Activated naive CD4-positive, alpha-beta T cell treated with anti-CD3 and anti-CD28 coated beads for 36 hours (primary cell): ENCODE measurements at regions of chr2 and their contacts with region 1.

Region 1: GRCh38 chr2:172465417-172466334 is 38.3 kb downstream of the ITGA6 start:
- DNase-seq: peak; percentile 91
- H3K4me3 Mint-ChIP-seq: peak overlapping the region; percentile 53
- H3K27ac Mint-ChIP-seq: peak overlapping the region; percentile 75
- H3K4me1 Mint-ChIP-seq: peaks cover 74% of the 10 kb centered on the region
- H3K27me3 Mint-ChIP-seq: no peaks in the 10 kb centered on the region

Region 2: GRCh38 chr2:171687287-171688128 is 778.2 kb before region 1 on chr2 and contains the start of gene DYNC1I2:
- CTCF ChIA-PET with region 1: interaction called, 3 read pairs
- intact Hi-C with region 1: loop called (anchors 5 kb)
- DNase-seq: peak; percentile 88
- H3K4me3 Mint-ChIP-seq: peak within 1 kb of the TSS; percentile 84
- H3K27ac Mint-ChIP-seq: peak within 1 kb of the TSS; percentile 85
- H3K4me1 Mint-ChIP-seq: peaks cover 15% of the 10 kb centered on the region
- H3K27me3 Mint-ChIP-seq: no peaks in the 10 kb centered on the region
- total RNA-seq, gene DYNC1I2: 37.8 to 38.9 TPM

Region 3: GRCh38 chr2:172102391-172103278 is 363.0 kb before region 1 on chr2 and contains the start of gene DLX2:
- CTCF ChIA-PET with region 1: interaction called, 3 read pairs
- intact Hi-C with region 1: loop called (anchors 2 kb)
- DNase-seq: peak; percentile 74
- H3K4me3 Mint-ChIP-seq: peak within 1 kb of the TSS; percentile 76
- H3K27ac Mint-ChIP-seq: peak within 1 kb of the TSS; percentile 24
- H3K4me1 Mint-ChIP-seq: peaks cover 50% of the 10 kb centered on the region
- H3K27me3 Mint-ChIP-seq: peaks cover 71% of the 10 kb centered on the region
- total RNA-seq, gene DLX2: not detected

Region 4: DNA sequence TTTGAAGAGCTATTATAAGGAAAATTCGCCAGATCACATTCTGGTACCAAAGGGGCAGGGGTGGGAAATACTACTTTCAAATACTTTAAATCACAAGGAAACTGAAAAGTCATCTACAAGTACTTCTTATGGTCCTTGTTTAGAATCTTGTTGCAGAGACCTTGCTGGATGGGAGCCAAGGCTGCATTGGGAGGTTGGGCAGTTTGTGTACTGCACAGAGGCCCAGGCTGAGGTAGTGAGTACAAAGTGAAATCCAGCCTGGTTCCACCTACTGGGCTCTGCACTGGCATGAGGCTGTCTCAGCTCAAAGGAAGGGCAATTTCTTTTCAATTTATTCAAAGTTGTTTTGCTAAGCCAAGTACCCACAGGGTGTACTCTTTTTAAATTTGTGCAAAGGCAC is 222.7 kb before region 1 on chr2:
- CTCF ChIA-PET with region 1: interaction called, 11 read pairs
- intact Hi-C with region 1: no loop called
- DNase-seq: no peak
- H3K4me3 Mint-ChIP-seq: no peak overlapping the region
- H3K27ac Mint-ChIP-seq: no peak overlapping the region
- H3K4me1 Mint-ChIP-seq: peaks cover 14% of the 10 kb centered on the region
- H3K27me3 Mint-ChIP-seq: no peaks in the 10 kb centered on the region

Region 5: DNA sequence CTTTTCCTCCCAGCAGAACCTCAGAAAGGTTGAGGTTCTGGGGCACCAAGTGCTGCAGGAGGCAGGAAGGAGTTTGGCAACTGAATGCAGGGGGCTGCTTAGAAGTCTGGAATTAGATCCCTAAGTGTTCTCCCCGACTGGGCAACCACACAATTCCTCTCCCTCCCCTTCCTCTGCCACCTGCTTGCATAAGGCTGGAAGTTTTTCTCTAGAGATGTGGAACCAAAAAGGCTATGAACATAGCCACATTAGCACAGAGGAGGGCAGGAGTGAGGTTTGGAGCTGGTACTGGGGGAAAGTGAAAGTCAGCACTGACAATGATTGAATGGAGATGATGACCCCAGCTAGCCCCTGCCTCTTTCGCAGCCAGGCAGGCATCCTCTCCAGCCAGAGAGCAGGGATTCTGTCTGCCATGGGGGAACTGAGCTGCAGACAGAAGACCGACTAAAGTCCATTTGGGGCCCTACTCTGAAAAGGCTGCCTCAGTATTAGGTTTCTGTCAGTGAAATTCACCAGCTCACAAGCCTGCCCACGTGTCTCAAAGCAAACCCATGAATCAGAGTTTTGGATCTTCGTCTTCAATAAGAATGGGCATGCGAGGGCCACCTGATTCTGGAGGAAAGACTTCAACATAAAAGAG is 126.2 kb before region 1 on chr2:
- CTCF ChIA-PET with region 1: interaction called, 5 read pairs
- intact Hi-C with region 1: loop called (anchors 1 kb)
- DNase-seq: peak; percentile 31
- H3K4me3 Mint-ChIP-seq: peak overlapping the region; percentile 60
- H3K27ac Mint-ChIP-seq: no peak overlapping the region
- H3K4me1 Mint-ChIP-seq: peaks cover 21% of the 10 kb centered on the region
- H3K27me3 Mint-ChIP-seq: no peaks in the 10 kb centered on the region

Region 6: DNA sequence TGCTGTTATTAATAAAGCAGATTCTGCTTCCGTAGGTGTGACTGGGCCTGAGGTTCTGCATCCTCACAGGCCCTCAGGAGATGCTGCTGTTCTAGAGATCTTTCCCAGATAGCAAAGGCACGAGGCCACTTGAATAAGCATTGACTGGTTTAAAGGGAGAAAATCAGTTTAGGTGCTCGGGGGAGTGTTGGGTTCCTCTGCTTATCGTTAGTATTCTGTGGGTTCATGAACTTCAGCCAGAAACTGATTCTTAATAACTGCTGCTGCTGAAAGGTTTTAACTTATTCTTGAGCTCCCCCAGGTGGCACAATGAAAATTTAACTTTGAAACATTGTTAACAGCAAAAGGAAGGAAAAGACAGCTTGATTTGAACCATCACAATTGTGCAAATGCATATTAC is 18.6 kb after region 1 on chr2:
- CTCF ChIA-PET with region 1: interaction called, 87 read pairs
- intact Hi-C with region 1: loop called (anchors 1 kb)
- DNase-seq: peak; percentile 37
- H3K4me3 Mint-ChIP-seq: no peak overlapping the region
- H3K27ac Mint-ChIP-seq: no peak overlapping the region
- H3K4me1 Mint-ChIP-seq: peaks cover 52% of the 10 kb centered on the region
- H3K27me3 Mint-ChIP-seq: no peaks in the 10 kb centered on the region